AG04450 (cell line): ENCODE measurements at regions of chr7 and their contacts with region 1.

Region 1: GRCh38 chr7:116929914-116930913 is 23.1 kb upstream of the ST7 start:
- DNase-seq: peak; percentile 58
- H3K4me3 ChIP-seq: no peak overlapping the region
- H3K27ac ChIP-seq: no peak overlapping the region
- H3K27me3 ChIP-seq: no peaks in the 10 kb centered on the region
- CTCF ChIP-seq: peak; percentile 91

Region 2: DNA sequence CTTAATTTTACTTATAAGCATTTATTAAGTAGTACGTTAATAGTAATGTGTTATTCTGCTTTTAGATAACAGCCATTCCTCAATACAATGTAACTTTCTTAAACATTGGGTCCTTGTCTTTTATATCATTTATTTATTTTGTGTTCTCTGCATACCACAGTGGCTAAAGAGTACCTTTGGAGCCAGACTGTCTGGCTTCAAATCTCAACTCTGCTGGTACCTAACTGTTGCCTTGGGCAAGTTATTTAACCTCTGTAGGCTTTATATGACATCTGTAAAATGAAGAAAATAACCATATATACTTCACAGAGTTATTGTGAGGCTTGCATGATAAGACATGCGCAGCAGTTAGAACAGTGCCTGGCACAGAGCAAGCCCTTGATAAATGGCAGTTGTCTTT is 1610.7 kb before region 1 on chr7:
- CTCF ChIA-PET with region 1: no interaction called
- POLR2A ChIA-PET with region 1: no interaction called
- DNase-seq: no peak
- H3K4me3 ChIP-seq: no peak overlapping the region
- H3K27ac ChIP-seq: no peak overlapping the region
- H3K27me3 ChIP-seq: no peaks in the 10 kb centered on the region
- CTCF ChIP-seq: no peak

Region 3: GRCh38 chr7:116918704-116919103 is 11.5 kb before region 1 on chr7:
- CTCF ChIA-PET with region 1: interaction called, 19 read pairs
- POLR2A ChIA-PET with region 1: no interaction called
- DNase-seq: no peak
- H3K4me3 ChIP-seq: no peak overlapping the region
- H3K27ac ChIP-seq: no peak overlapping the region
- H3K27me3 ChIP-seq: no peaks in the 10 kb centered on the region
- CTCF ChIP-seq: no peak

Region 4: GRCh38 chr7:116984917-116985316 is 54.7 kb after region 1 on chr7:
- CTCF ChIA-PET with region 1: interaction called, 10 read pairs
- POLR2A ChIA-PET with region 1: no interaction called
- DNase-seq: no peak
- H3K4me3 ChIP-seq: no peak overlapping the region
- H3K27ac ChIP-seq: no peak overlapping the region
- H3K27me3 ChIP-seq: no peaks in the 10 kb centered on the region
- CTCF ChIP-seq: peak; percentile 69

Region 5: GRCh38 chr7:117119192-117119924 is 189.1 kb after region 1 on chr7:
- CTCF ChIA-PET with region 1: interaction called, 76 read pairs
- POLR2A ChIA-PET with region 1: no interaction called
- DNase-seq: peak; percentile 61
- H3K4me3 ChIP-seq: no peak overlapping the region
- H3K27ac ChIP-seq: no peak overlapping the region
- H3K27me3 ChIP-seq: no peaks in the 10 kb centered on the region
- CTCF ChIP-seq: peak; percentile 88